ENCODE measurements at regions of chr3 and their contacts with region 1.

Region 1: GRCh38 chr3:194134757-194135528 is 1.0 kb upstream of the HES1 start:
- H3K4me3 ChIP-seq: peak overlapping the region; percentile 34
- H3K27ac ChIP-seq: peak overlapping the region; percentile 98
- H3K4me1 ChIP-seq: peaks cover 10% of the 10 kb centered on the region
- CTCF ChIP-seq: no peak

Region 2: GRCh38 chr3:193768070-193768394 is 366.9 kb before region 1 on chr3:
- CTCF ChIA-PET with region 1: no interaction called
- POLR2A ChIA-PET with region 1: no interaction called
- H3K4me3 ChIP-seq: no peak overlapping the region
- H3K27ac ChIP-seq: no peak overlapping the region
- H3K4me1 ChIP-seq: no peaks in the 10 kb centered on the region
- CTCF ChIP-seq: no peak

Region 3: GRCh38 chr3:193780810-193781472 is 354.0 kb before region 1 on chr3:
- CTCF ChIA-PET with region 1: interaction called, 13 read pairs
- POLR2A ChIA-PET with region 1: interaction called, 116 read pairs
- H3K4me3 ChIP-seq: no peak overlapping the region
- H3K27ac ChIP-seq: peak overlapping the region; percentile 42; the same call in 1 of the 2 replicates
- H3K4me1 ChIP-seq: peaks cover 8% of the 10 kb centered on the region
- CTCF ChIP-seq: no peak

Region 4: DNA sequence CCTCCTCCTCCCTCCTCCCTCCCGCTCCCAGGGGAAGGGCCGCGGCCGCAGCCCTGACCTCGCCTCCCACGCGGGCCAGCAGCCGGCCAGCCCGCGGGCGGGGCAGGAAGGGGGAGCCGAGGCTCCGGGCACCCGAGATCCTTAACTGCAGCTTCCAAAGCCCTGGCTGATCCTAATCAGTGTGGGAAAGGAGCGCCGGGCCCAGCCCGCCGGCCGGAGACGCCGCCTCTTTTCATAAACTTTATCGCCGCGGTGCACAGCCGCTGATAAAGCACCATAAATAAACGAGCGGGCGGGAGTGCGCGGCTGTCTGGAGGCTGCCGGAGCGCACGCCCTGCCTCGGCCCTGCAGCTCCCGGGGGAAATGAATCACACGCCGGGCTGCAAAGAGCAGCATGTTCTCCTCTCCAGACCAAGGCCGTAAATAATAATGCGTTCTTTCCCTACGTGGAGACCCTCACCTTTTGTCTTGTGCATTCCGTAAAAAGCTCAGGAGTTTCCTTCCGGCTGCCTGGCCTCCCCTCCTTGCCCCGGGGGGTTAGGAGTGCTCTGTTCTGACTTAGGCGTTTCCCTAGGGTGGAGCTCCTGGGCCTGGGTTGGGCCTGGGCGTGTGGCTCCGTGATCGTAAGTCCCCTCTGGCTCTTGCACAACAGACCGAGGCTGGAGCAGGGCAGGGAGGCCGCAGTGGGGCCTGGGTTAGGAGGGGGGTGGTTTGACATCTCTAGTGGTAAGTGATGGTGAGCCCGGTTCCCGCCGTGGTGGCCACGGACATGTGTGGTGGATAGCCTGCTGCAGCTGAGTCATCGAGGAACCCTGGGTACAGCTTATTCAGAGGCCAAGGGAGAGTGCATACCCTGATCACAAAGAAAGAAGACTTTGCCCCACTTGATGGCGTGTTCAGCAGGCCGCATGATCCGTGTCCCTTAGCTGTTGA is 131.6 kb before region 1 on chr3:
- CTCF ChIA-PET with region 1: no interaction called
- POLR2A ChIA-PET with region 1: interaction called, 50 read pairs
- H3K4me3 ChIP-seq: peak overlapping the region; percentile 24
- H3K27ac ChIP-seq: peak overlapping the region; percentile 93
- H3K4me1 ChIP-seq: peaks cover 4% of the 10 kb centered on the region
- CTCF ChIP-seq: no peak

Region 5: GRCh38 chr3:194070634-194071409 is 64.1 kb before region 1 on chr3:
- CTCF ChIA-PET with region 1: interaction called, 4 read pairs
- POLR2A ChIA-PET with region 1: interaction called, 14 read pairs
- H3K4me3 ChIP-seq: peak overlapping the region; percentile 34
- H3K27ac ChIP-seq: peak overlapping the region; percentile 85
- H3K4me1 ChIP-seq: no peaks in the 10 kb centered on the region
- CTCF ChIP-seq: no peak

Region 6: DNA sequence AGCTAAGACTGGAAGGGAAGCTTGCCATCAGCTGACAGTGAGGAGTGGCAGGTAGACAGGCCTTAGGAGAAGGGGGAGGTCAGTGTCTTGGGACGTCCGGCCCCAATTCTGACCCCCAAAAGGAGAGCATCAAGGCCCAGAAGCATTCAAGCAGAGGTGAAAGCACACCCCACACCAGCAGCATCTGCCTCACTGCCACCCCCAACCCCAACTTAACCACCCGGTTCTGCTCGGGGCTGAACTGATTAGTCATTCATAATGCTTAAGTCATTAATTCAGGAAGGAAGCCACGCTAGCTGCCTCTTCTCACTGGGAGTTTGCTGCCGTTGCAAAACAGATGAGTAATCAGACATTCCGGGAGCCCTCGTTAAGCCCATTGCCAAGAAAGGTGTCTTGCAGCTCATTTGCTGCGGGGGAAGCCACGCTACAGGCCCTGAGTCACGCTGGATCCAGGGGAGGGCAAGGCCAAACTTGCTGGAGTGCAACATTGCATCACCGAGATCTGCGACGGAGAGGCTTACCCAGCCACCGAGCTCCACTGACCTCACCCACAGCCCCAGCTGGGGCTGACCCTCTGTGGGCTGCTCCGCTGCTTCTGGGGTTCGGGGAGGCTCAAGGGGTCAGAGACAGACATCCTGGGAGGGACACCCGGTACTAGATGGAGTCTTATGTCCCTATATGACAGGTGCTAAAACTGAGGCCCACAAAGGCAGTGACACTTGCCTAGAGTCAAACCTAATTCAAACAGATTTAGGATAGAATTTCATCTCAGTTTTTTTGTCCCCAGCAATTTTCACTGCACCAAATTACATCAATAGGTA is 45.4 kb before region 1 on chr3:
- CTCF ChIA-PET with region 1: interaction called, 4 read pairs
- POLR2A ChIA-PET with region 1: interaction called, 11 read pairs
- H3K4me3 ChIP-seq: no peak overlapping the region
- H3K27ac ChIP-seq: peak overlapping the region; percentile 2; the same call in 1 of the 2 replicates
- H3K4me1 ChIP-seq: no peaks in the 10 kb centered on the region
- CTCF ChIP-seq: no peak

Region 7: GRCh38 chr3:194265483-194265892 is 130.5 kb after region 1 on chr3:
- CTCF ChIA-PET with region 1: no interaction called
- POLR2A ChIA-PET with region 1: no interaction called
- H3K4me3 ChIP-seq: no peak overlapping the region
- H3K27ac ChIP-seq: no peak overlapping the region
- H3K4me1 ChIP-seq: no peaks in the 10 kb centered on the region
- CTCF ChIP-seq: no peak

Region 8: DNA sequence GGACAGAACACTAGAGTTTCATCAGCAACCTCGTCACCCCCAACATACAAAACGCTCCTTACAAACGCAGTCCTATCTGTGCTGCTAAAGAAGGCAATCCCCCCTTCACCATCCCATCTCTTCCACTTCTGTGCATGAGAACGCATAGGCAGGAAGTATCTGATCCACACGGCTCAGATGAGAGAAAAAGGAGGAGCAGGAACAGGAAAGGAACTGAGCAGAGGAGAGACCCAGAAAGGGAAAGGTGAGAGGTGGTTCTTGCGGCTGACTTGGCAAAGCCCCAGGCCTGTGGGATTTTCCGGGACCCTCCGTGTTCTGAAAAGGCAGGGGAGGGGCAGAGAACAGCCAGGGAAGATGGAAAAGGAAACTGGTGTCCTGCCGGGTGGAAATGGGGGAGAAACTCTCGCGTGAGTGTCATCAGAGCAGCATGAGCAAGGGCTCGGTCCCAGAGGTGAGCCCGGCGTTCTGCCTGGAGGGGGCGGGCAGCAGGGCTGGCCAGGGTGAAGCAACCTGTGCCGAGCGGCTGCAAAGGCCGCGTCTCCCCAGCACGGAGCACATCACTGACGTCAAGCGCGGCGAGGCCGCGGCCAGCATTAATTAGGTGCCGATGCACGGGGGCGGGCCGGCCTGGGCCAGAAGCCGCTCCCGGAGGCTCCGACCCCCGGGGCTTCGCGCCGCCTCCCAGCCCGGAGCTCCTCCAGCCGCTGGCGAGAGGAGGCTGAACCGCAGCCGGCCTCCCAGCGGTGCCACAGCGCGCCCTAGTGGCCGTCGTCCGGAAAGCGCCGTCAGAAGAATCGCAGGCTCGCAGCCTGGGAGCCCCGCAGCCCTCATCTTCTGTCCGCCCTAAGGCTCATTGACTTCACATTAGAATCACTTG is 180.4 kb after region 1 on chr3:
- CTCF ChIA-PET with region 1: interaction called, 25 read pairs
- POLR2A ChIA-PET with region 1: interaction called, 145 read pairs
- H3K4me3 ChIP-seq: peak overlapping the region; percentile 33
- H3K27ac ChIP-seq: peak overlapping the region; percentile 83
- H3K4me1 ChIP-seq: no peaks in the 10 kb centered on the region; the same call in 1 of the 2 replicates
- CTCF ChIP-seq: peak; percentile 88

Region 9: GRCh38 chr3:194497821-194498598 is 363.1 kb after region 1 on chr3:
- CTCF ChIA-PET with region 1: no interaction called
- POLR2A ChIA-PET with region 1: no interaction called
- H3K4me3 ChIP-seq: no peak overlapping the region
- H3K27ac ChIP-seq: no peak overlapping the region
- H3K4me1 ChIP-seq: 0 out of 2 replicates have a peak, but pooled peaks cover 2% of the 10 kb centered on the region
- CTCF ChIP-seq: no peak